ENCODE measurements at regions of chr14 and their contacts with region 1.

Region 1: GRCh38 chr14:101761032-101761880 is at the start of gene PPP2R5C:
- DNase-seq: peak; percentile 79 to 89 (median 87)
- H3K4me3 ChIP-seq: peak within 1 kb of the TSS; percentile 84 to 95 (median 90)
- H3K4me3 Mint-ChIP-seq: peak within 1 kb of the TSS; percentile 90 to 92
- H3K27ac ChIP-seq: peak within 1 kb of the TSS; percentile 87 to 90
- H3K27ac Mint-ChIP-seq: peak within 1 kb of the TSS; percentile 54 to 91 (median 84)
- H3K4me1 ChIP-seq: peaks cover 11 to 18% of the 10 kb centered on the region in 2 donors
- H3K4me1 Mint-ChIP-seq: peaks cover 17% of the 10 kb centered on the region
- H3K27me3 ChIP-seq: peaks cover 16 to 56% of the 10 kb centered on the region in 2 donors
- H3K27me3 Mint-ChIP-seq: peaks cover 39 to 60% (median 51%) of the 10 kb centered on the region in 3 donors
- CTCF ChIP-seq: no peak
- polyA plus RNA-seq, gene PPP2R5C: 61.9 to 72.5 (median 64.0) TPM

Region 2: GRCh38 chr14:101707068-101707842 is 54.0 kb before region 1 on chr14:
- intact Hi-C with region 1: loop called (anchors 2 to 5 kb)
- DNase-seq: peak; percentile 78 to 87 (median 82)
- H3K4me3 ChIP-seq: peak overlapping the region in 1 of 3 experiments; percentile 31
- H3K4me3 Mint-ChIP-seq: peak overlapping the region in 1 of 2 donors; percentile 63
- H3K27ac ChIP-seq: no peak overlapping the region
- H3K27ac Mint-ChIP-seq: peak overlapping the region in 3 of 7 donors; percentile 13 to 83 (median 41)
- H3K4me1 ChIP-seq: peaks cover 23 to 34% of the 10 kb centered on the region in 2 donors
- H3K4me1 Mint-ChIP-seq: peaks cover 28% of the 10 kb centered on the region
- H3K27me3 ChIP-seq: peaks cover 15 to 33% of the 10 kb centered on the region in 2 donors
- H3K27me3 Mint-ChIP-seq: peaks cover 37 to 56% (median 40%) of the 10 kb centered on the region in 3 donors
- CTCF ChIP-seq: peak; percentile 84

Region 3: GRCh38 chr14:101731187-101732080 is 29.8 kb before region 1 on chr14:
- intact Hi-C with region 1: loop called in 1 of 2 experiments (anchors 2 kb)
- DNase-seq: peak; percentile 94 to 99 (median 96)
- H3K4me3 ChIP-seq: peak overlapping the region in 1 of 3 experiments; percentile 46
- H3K4me3 Mint-ChIP-seq: peak overlapping the region; percentile 16 to 68
- H3K27ac ChIP-seq: peak overlapping the region; percentile 85 to 89
- H3K27ac Mint-ChIP-seq: peak overlapping the region; percentile 89 to 97 (median 96)
- H3K4me1 ChIP-seq: peaks cover 26 to 28% of the 10 kb centered on the region in 2 donors
- H3K4me1 Mint-ChIP-seq: peaks cover 32% of the 10 kb centered on the region
- H3K27me3 ChIP-seq: no peaks in the 10 kb centered on the region
- H3K27me3 Mint-ChIP-seq: peaks cover 10 to 20% (median 11%) of the 10 kb centered on the region in 3 donors
- CTCF ChIP-seq: no peak

Region 4: GRCh38 chr14:101947906-101948665 is 186.8 kb after region 1 on chr14:
- intact Hi-C with region 1: loop called (anchors 10 kb)
- DNase-seq: peak; percentile 99 to 100 (median 100)
- H3K4me3 ChIP-seq: peak overlapping the region; percentile 51 to 79 (median 67)
- H3K4me3 Mint-ChIP-seq: peak overlapping the region; percentile 88 to 98
- H3K27ac ChIP-seq: peak overlapping the region; percentile 93 to 96
- H3K27ac Mint-ChIP-seq: peak overlapping the region; percentile 98 to 100 (median 100)
- H3K4me1 ChIP-seq: peaks cover 17 to 27% of the 10 kb centered on the region in 2 donors
- H3K4me1 Mint-ChIP-seq: peaks cover 24% of the 10 kb centered on the region
- H3K27me3 ChIP-seq: peaks cover 6 to 19% of the 10 kb centered on the region in 2 donors
- H3K27me3 Mint-ChIP-seq: peaks cover 31 to 36% (median 35%) of the 10 kb centered on the region in 3 donors
- CTCF ChIP-seq: no peak